Adrenal gland (tissue), 19 donors: ENCODE measurements at regions of chr10 and their contacts with region 1.

Region 1: DNA sequence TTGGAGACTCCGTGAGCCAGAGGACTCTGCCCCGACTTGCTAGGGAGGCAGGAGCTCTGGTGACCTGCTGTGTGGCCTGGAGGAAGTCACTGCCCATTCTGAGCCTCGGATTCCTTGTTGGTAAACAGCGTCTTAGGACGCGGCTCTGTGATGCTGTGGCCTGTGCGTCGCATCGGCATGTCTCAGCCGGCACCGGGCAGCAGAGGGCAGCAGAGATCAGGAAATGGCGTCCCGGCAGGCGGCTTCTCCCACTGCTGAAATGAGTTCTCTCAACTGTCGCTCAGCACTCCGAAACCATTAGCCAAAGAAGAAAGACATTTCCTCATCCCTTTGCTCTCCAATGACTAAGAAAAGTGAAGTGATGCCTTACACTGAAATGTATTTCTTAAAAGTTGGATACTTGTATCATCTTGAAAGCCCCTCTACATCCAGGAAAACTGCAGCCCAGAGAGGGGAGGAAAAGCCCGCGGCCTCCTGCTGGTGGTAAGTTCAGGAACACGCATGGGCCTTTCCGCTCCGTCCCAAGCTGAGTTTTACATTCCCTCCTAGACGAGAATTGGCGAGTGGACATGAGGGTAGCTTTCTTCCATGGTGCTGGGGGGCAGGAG is 91.7 kb downstream of the WDR11 start:
- DNase-seq: peak; percentile 79 to 90 (median 85)
- H3K4me3 ChIP-seq: no peak overlapping the region
- H3K27ac ChIP-seq: no peak overlapping the region
- H3K4me1 ChIP-seq: no peaks in the 10 kb centered on the region
- H3K27me3 ChIP-seq: no peaks in the 10 kb centered on the region
- CTCF ChIP-seq: peak; percentile 72 to 96 (median 92)
- POLR2A ChIP-seq: no peak

Region 2: GRCh38 chr10:120719333-120719732 is 223.6 kb before region 1 on chr10:
- intact Hi-C with region 1: no loop called
- DNase-seq: no peak
- H3K4me3 ChIP-seq: no peak overlapping the region
- H3K27ac ChIP-seq: no peak overlapping the region
- H3K4me1 ChIP-seq: no peaks in the 10 kb centered on the region
- H3K27me3 ChIP-seq: no peaks in the 10 kb centered on the region
- CTCF ChIP-seq: no peak
- POLR2A ChIP-seq: no peak

Region 3: DNA sequence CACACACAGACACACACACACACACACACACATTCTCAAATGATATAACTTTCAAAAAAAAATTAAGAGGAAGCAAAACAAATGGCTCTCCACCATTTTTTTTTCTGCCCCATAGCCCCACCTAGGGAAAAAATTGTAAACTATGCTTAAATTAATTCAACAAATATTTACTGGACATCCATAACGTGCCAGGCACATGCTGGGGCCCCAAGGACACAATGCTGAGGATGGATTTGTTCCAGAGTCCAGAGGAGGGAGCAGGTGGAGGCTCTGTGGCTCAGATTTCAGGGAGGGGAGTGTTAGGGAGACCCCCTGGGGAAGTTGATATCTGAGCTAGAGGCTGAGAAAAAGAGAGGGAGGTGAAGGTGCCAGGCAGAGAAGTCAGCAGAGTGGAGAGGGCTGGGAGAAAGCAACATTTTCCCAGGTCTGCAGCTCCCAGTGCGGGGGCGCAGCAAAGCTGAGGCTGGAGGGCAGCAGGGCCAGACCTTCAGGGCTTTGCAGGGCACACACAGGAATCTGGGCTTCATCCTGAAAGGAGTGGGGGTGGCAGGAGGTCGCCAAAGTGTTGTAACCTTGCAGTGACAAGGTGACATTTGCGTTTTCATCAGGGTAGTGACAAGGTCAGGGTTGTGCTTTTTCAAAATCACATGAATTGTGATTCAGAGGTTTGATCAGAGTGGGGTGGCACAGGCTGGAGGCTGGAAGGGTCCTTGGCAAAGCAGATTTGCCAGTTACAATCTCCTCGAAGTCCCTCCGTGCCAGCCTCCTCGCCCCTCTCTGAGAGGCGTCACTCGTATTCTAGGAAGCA is 169.9 kb after region 1 on chr10:
- intact Hi-C with region 1: loop called in 1 of 2 experiments (anchors 10 kb)
- DNase-seq: peak in 6 of 7 donors; percentile 25 to 53 (median 37)
- H3K4me3 ChIP-seq: no peak overlapping the region
- H3K27ac ChIP-seq: peak overlapping the region in 3 of 5 donors; percentile 54 to 68 (median 55)
- H3K4me1 ChIP-seq: peaks cover 9 to 12% of the 10 kb centered on the region in 2 donors
- H3K27me3 ChIP-seq: no peaks in the 10 kb centered on the region
- CTCF ChIP-seq: peak in 5 of 6 experiments; percentile 17 to 39 (median 26)
- POLR2A ChIP-seq: no peak

Region 4: DNA sequence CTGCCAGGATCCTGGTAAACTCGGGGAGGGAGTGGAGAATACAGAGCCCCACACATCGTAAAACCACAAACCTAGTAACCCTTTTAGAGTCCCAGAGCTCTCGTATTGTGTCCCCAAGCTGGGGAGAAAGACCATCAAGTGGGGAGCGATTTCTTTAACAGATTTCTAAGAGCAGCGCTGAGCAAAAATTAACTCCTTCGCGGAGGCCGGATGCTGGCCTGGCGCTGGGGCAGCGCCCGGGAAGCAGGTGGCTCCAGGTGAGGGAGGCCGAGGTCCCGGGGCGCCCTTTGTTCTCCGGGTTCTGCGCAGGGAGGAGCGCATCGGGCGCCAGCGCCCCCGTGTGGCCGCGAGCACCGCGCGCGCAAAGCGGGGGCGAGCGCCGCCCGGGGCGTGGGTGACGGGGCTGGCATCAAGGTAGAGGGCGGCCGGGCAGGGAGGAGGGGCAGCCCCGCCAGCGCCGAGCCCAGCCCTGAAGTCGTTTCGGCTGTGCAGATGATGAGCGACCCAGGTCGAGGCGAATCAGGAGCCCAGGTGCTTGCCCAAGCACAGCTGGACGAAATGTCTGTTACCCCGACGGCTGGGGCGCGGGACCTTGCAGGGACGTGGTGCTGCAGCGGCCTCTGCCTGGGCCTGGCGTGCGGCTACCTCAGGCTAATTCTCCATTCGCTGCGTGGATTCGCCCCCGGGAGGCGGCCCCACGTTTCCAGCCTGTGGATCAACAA is 665.7 kb after region 1 on chr10:
- intact Hi-C with region 1: loop called (anchors 2 to 5 kb)
- DNase-seq: peak; percentile 26 to 63 (median 48)
- H3K4me3 ChIP-seq: peak overlapping the region in 1 of 4 donors; percentile 33
- H3K27ac ChIP-seq: no peak overlapping the region
- H3K4me1 ChIP-seq: no peaks in the 10 kb centered on the region
- H3K27me3 ChIP-seq: no peaks in the 10 kb centered on the region
- CTCF ChIP-seq: peak; percentile 46 to 94 (median 74)
- POLR2A ChIP-seq: no peak

Region 5: GRCh38 chr10:121734589-121735045 is 791.7 kb after region 1 on chr10:
- intact Hi-C with region 1: loop called (anchors 5 to 10 kb)
- DNase-seq: peak in 3 of 7 donors; percentile 16 to 33 (median 19)
- H3K4me3 ChIP-seq: no peak overlapping the region
- H3K27ac ChIP-seq: no peak overlapping the region
- H3K4me1 ChIP-seq: no peaks in the 10 kb centered on the region
- H3K27me3 ChIP-seq: no peaks in the 10 kb centered on the region
- CTCF ChIP-seq: peak; percentile 12 to 74 (median 54)
- POLR2A ChIP-seq: no peak

Region 6: DNA sequence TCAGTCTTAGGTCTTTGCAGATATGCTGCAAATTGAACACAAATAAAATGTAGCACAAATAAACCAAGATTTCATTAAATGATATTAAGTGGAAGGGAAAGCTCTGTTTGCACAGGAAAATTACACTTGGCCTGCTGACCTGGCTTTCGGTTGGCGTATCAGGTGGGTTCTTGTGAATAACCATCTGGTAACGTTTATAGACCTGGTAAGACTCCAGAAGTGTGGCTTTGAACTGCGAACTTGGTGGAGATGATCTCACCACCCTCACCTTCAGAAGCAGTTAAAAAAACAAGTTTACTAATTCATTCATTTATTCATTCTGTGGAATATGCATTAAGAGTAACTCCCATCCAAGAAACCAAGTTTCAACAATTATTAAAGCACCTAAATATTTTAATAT is 956.8 kb after region 1 on chr10:
- intact Hi-C with region 1: loop called in 1 of 2 experiments (anchors 5 kb)
- DNase-seq: no peak
- H3K4me3 ChIP-seq: no peak overlapping the region
- H3K27ac ChIP-seq: no peak overlapping the region
- H3K4me1 ChIP-seq: peaks cover 2 to 10% of the 10 kb centered on the region in 2 donors
- H3K27me3 ChIP-seq: no peaks in the 10 kb centered on the region
- CTCF ChIP-seq: no peak
- POLR2A ChIP-seq: no peak